Caco-2 (cell line): ENCODE measurements at regions of chr4 and their contacts with region 1.

Region 1: DNA sequence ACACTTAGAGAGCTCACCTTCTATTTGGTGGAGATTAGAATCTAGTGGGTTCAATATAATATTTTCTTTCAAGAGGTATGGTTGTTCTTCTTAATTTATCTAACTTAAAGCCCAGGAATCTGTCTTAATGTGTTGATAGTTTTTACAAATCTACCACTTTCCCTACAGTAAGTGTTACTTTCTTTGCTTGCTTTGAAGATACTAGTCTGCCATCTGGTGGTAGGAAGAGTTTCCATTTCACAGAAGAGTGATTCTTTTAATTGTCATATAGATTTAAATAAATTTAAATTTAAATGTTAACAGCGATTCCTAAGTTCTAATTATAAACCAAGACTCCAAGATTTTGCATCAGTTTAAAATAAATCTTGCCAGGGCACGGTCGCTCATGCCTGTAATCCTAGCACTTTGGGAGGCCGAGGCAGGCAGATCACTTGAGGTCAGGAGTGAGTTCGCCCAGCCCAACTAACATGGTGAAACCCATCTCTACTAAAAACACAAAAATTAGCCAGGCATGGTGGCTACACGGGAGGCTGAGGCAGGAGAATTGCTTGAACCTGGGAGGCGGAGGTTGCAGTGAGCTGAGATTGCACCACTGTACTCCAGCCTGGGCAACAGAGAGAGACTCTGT is 43.5 kb downstream of the NUDT9 start:
- DNase-seq: peak in 1 of 2 experiments; percentile 38
- H3K4me3 ChIP-seq: no peak overlapping the region
- H3K4me3 Mint-ChIP-seq: no peak overlapping the region
- H3K27ac Mint-ChIP-seq: no peak overlapping the region
- H3K4me1 ChIP-seq: peaks cover 5% of the 10 kb centered on the region; the same call in 1 of the 2 replicates
- H3K4me1 Mint-ChIP-seq: no peaks in the 10 kb centered on the region
- H3K27me3 ChIP-seq: no peaks in the 10 kb centered on the region
- H3K27me3 Mint-ChIP-seq: no peaks in the 10 kb centered on the region
- CTCF ChIP-seq: peak; percentile 25 to 38

Region 2: DNA sequence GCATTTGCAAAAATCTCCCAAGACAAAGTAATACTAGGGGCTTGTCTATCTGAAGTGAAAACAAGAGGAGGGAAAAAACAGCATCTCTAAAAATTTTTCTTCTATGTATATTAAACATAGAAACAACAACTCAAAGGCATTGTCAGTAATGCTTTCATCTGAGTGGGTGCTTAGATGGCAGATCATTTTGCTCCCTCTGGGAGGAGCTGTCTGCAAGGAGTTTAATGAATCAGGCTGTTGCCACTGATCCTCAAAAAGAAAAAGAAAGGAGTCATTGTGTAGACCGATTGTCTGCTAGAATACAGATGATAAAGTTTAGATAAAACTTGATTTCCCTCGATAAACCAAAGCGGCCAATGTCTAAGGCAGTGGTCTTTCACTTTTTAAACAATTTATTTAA is 195.7 kb before region 1 on chr4:
- CTCF ChIA-PET with region 1: no interaction called
- POLR2A ChIA-PET with region 1: no interaction called
- intact Hi-C with region 1: loop called (anchors 1 kb)
- DNase-seq: peak in 1 of 2 experiments; percentile 42
- H3K4me3 ChIP-seq: no peak overlapping the region
- H3K4me3 Mint-ChIP-seq: no peak overlapping the region
- H3K27ac Mint-ChIP-seq: no peak overlapping the region
- H3K4me1 ChIP-seq: no peaks in the 10 kb centered on the region; the same call in 1 of the 2 replicates
- H3K4me1 Mint-ChIP-seq: no peaks in the 10 kb centered on the region
- H3K27me3 ChIP-seq: no peaks in the 10 kb centered on the region
- H3K27me3 Mint-ChIP-seq: peaks cover 2% of the 10 kb centered on the region
- CTCF ChIP-seq: peak in 1 of 2 experiments; percentile 68

Region 3: GRCh38 chr4:87375719-87376291 is 90.0 kb before region 1 on chr4:
- CTCF ChIA-PET with region 1: interaction called, 6 read pairs
- POLR2A ChIA-PET with region 1: no interaction called
- intact Hi-C with region 1: loop called (anchors 1 kb)
- DNase-seq: peak; percentile 44 to 56
- H3K4me3 ChIP-seq: no peak overlapping the region
- H3K4me3 Mint-ChIP-seq: no peak overlapping the region
- H3K27ac Mint-ChIP-seq: no peak overlapping the region
- H3K4me1 ChIP-seq: peaks cover 4% of the 10 kb centered on the region
- H3K4me1 Mint-ChIP-seq: no peaks in the 10 kb centered on the region
- H3K27me3 ChIP-seq: no peaks in the 10 kb centered on the region
- H3K27me3 Mint-ChIP-seq: no peaks in the 10 kb centered on the region
- CTCF ChIP-seq: peak; percentile 49 to 66

Region 4: GRCh38 chr4:87422104-87423052 is 43.5 kb before region 1 on chr4 and contains the start of gene NUDT9:
- CTCF ChIA-PET with region 1: no interaction called
- POLR2A ChIA-PET with region 1: interaction called, 3 read pairs
- intact Hi-C with region 1: loop called (anchors 2 kb)
- DNase-seq: peak; percentile 93 to 95
- H3K4me3 ChIP-seq: peak within 1 kb of the TSS; percentile 79
- H3K4me3 Mint-ChIP-seq: peak within 1 kb of the TSS; percentile 94
- H3K27ac Mint-ChIP-seq: peak within 1 kb of the TSS; percentile 96
- H3K4me1 ChIP-seq: peaks cover 17% of the 10 kb centered on the region
- H3K4me1 Mint-ChIP-seq: peaks cover 13% of the 10 kb centered on the region
- H3K27me3 ChIP-seq: no peaks in the 10 kb centered on the region
- H3K27me3 Mint-ChIP-seq: no peaks in the 10 kb centered on the region
- CTCF ChIP-seq: no peak
- total RNA-seq, gene NUDT9: 27.9 and 28.7 TPM in 2 replicates